Colonic mucosa (tissue), 4 donors: ENCODE measurements at regions of chr11 and their contacts with region 1.

Region 1: GRCh38 chr11:59186130-59186594 is 14.2 kb downstream of the DTX4 start:
- DNase-seq: peak; percentile 94
- H3K4me3 ChIP-seq: no peak overlapping the region
- H3K27ac ChIP-seq: peak overlapping the region; percentile 73
- H3K4me1 ChIP-seq: peaks cover 39% of the 10 kb centered on the region
- H3K27me3 ChIP-seq: no peaks in the 10 kb centered on the region
- CTCF ChIP-seq: peak; percentile 78

Region 2: GRCh38 chr11:59171508-59172322 is 14.4 kb before region 1 on chr11 and contains the start of gene DTX4:
- intact Hi-C with region 1: loop called (anchors 2 kb)
- DNase-seq: peak; percentile 97
- H3K4me3 ChIP-seq: peak within 1 kb of the TSS; percentile 61
- H3K27ac ChIP-seq: peak within 1 kb of the TSS; percentile 91
- H3K4me1 ChIP-seq: peaks cover 5% of the 10 kb centered on the region
- H3K27me3 ChIP-seq: no peaks in the 10 kb centered on the region
- CTCF ChIP-seq: peak; percentile 90
- total RNA-seq, gene DTX4: 54.7 to 59.7 TPM